ENCODE measurements at regions of chr2 and their contacts with region 1.

Region 1: DNA sequence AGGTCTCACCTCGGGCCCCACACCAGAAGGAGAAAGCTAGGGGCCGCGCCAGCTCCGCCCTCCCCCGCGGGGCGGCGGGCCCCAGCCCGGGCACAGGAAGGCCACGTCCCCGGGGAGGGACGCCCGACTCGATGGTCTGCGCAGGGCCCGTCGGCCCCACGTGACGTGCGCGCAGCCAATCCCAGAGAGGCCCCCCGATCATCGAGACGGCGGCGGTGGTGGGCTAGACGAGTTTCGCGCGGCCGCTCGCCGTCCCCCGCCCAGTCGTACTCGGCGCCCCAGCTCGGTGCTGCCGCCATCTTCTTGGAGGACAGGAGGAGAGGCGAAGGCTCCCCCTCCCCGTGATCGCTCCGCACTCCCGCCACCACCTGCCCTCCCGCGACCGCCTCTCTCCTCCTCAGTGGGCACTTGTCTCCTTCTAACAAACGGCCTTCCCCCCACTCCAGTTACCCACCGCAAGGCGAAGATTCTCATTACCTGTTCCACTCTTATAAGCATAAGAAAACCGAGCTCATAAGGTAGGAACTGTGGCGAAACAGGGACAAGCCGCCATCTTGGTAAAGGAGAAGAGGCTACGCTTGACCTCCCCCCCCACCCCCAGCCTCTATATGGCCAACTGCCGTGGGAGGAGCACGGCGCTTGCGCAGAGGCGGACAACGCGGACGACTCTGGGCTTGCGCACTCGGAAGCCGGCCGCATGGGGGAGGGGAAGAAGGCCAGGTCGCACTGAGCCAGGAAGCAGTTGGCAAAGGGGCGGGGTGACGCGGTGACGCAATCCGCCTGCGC is at the start of gene HDLBP:
- DNase-seq: peak; percentile 99
- H3K4me3 ChIP-seq: peak within 1 kb of the TSS; percentile 77 to 97
- H3K27ac ChIP-seq: peak within 1 kb of the TSS; percentile 99
- H3K4me1 ChIP-seq: peaks cover 76% of the 10 kb centered on the region
- H3K27me3 ChIP-seq: no peaks in the 10 kb centered on the region
- CTCF ChIP-seq: no peak
- POLR2A ChIP-seq: peak in 1 of 2 donors; percentile 83
- total RNA-seq, gene HDLBP: 300 TPM

Region 2: DNA sequence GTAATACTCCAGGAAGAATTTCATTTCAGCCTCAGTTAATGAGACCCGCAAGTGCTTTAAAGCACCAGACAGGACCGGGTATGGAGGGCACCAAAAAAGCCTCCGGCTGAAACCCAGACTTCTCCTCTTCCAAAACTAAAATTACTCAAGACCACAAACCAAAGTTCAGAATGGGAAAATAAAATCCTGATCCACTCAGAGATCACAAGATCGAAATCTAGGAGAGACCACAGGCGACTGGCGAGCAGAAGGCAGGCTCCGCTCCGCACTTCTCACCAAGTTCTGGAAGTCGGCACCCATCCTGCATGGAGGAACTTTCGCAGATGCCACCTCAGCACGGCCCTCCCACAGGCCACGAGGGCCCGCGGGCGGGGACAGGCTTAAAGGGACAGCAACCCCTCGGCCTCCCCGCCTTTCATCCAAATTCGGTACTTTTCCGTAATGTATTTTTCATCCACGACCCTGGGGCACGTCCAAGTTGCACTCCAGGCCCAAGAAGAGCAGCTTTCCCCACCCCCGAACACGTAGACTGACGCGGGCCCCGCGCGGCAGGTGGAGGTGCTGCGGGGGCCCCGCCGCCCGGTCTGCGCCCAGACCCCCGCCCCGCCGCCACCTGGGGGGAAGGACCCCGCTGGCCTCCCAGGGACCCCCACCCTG is 43.5 kb before region 1 on chr2:
- intact Hi-C with region 1: loop called (anchors 5 kb)
- DNase-seq: peak in 1 of 2 donors; percentile 92
- H3K4me3 ChIP-seq: peak overlapping the region; percentile 91 to 92
- H3K27ac ChIP-seq: peak overlapping the region; percentile 94
- H3K4me1 ChIP-seq: peaks cover 52% of the 10 kb centered on the region
- H3K27me3 ChIP-seq: no peaks in the 10 kb centered on the region
- CTCF ChIP-seq: no peak
- POLR2A ChIP-seq: no peak

Region 3: GRCh38 chr2:241355983-241356870 is 40.9 kb after region 1 on chr2 and contains the start of gene FARP2:
- intact Hi-C with region 1: loop called (anchors 5 kb)
- DNase-seq: peak in 1 of 2 donors; percentile 98
- H3K4me3 ChIP-seq: peak within 1 kb of the TSS; percentile 81 to 95
- H3K27ac ChIP-seq: peak within 1 kb of the TSS; percentile 81
- H3K4me1 ChIP-seq: peaks cover 39% of the 10 kb centered on the region
- H3K27me3 ChIP-seq: no peaks in the 10 kb centered on the region
- CTCF ChIP-seq: no peak
- POLR2A ChIP-seq: peak in 1 of 2 donors; percentile 68
- total RNA-seq, gene FARP2: 32.9 TPM

Region 4: GRCh38 chr2:241637000-241637791 is 321.9 kb after region 1 on chr2 and contains the starts of genes ATG4B and THAP4:
- intact Hi-C with region 1: loop called (anchors 5 kb)
- DNase-seq: no peak
- H3K4me3 ChIP-seq: peak within 1 kb of the TSS; percentile 82 to 87
- H3K27ac ChIP-seq: peak within 1 kb of the TSS; percentile 98
- H3K4me1 ChIP-seq: peaks cover 56% of the 10 kb centered on the region
- H3K27me3 ChIP-seq: no peaks in the 10 kb centered on the region
- CTCF ChIP-seq: no peak
- POLR2A ChIP-seq: no peak
- total RNA-seq, gene ATG4B: 104 TPM
- total RNA-seq, gene THAP4: 44.4 TPM

Region 5: DNA sequence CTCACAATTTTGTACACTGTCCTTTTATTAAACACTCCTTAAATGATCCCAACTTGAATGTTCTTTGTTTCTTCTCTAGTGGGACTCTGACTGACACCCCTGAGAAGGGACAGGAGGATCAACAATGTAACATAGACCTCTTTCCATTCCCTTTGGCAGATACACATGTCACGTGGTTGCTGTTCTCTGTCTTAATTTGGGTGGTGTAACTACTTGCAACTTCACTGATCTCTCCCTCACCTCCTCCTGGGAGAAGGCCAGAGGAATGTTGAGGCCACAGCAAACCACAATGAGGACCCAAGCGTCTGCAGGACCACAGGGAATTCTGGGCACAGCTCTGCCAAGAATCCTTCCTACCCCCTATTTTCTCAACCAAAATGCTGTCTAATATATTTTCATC is 759.9 kb after region 1 on chr2:
- intact Hi-C with region 1: no loop called
- DNase-seq: no peak
- H3K4me3 ChIP-seq: no peak overlapping the region
- H3K27ac ChIP-seq: no peak overlapping the region
- H3K4me1 ChIP-seq: no peaks in the 10 kb centered on the region
- H3K27me3 ChIP-seq: no peaks in the 10 kb centered on the region
- CTCF ChIP-seq: no peak
- POLR2A ChIP-seq: no peak

Measured in vagina (tissue), 2 donors.